ENCODE measurements at regions of chr5 and their contacts with region 1.

Region 1: DNA sequence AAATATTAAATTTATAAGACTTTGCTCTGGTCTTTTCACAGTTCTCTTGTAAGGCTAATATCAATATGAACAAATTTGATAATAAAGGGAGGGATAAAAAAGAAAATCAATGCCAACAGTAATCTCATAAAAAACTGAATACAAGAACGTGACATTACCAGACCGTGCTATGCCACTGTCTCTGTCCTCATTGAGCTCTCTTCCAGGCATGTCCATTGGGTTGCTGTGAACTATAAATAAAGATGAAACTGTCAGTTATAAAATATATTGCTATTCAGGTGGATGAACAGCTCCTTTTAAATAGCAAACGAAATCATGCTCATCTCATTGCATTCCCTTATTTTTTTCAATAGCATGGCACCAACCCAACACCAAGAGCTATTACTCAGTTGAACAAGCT is 74.0 kb upstream of the RAPGEF6 start:
- DNase-seq: no peak
- ATAC-seq: no peak
- H3K4me3 ChIP-seq: no peak overlapping the region
- H3K27ac ChIP-seq: no peak overlapping the region
- H3K4me1 ChIP-seq: peaks cover 3% of the 10 kb centered on the region
- H3K27me3 ChIP-seq: no peaks in the 10 kb centered on the region
- CTCF ChIP-seq: no peak
- POLR2A ChIP-seq: no peak
- RAD21 ChIP-seq: no peak

Region 2: GRCh38 chr5:131685516-131686171 is 23.4 kb before region 1 on chr5:
- CTCF ChIA-PET with region 1: no interaction called
- POLR2A ChIA-PET with region 1: no interaction called
- dilution Hi-C with region 1: no loop called
- in situ Hi-C with region 1: no loop called
- intact Hi-C with region 1: no loop called
- DNase-seq: peak; percentile 30
- ATAC-seq: peak; percentile 62
- H3K4me3 ChIP-seq: no peak overlapping the region
- H3K27ac ChIP-seq: no peak overlapping the region
- H3K4me1 ChIP-seq: peaks cover 4% of the 10 kb centered on the region; the same call in 1 of the 2 replicates
- H3K27me3 ChIP-seq: no peaks in the 10 kb centered on the region
- CTCF ChIP-seq: no peak
- POLR2A ChIP-seq: no peak
- RAD21 ChIP-seq: no peak

Region 3: GRCh38 chr5:131720714-131721113 is 11.7 kb after region 1 on chr5:
- CTCF ChIA-PET with region 1: no interaction called
- POLR2A ChIA-PET with region 1: no interaction called
- dilution Hi-C with region 1: no loop called
- in situ Hi-C with region 1: no loop called
- intact Hi-C with region 1: loop called (anchors 2 kb)
- DNase-seq: no peak
- ATAC-seq: no peak
- H3K4me3 ChIP-seq: no peak overlapping the region
- H3K27ac ChIP-seq: no peak overlapping the region
- H3K4me1 ChIP-seq: no peaks in the 10 kb centered on the region
- H3K27me3 ChIP-seq: no peaks in the 10 kb centered on the region
- CTCF ChIP-seq: no peak
- POLR2A ChIP-seq: no peak
- RAD21 ChIP-seq: no peak